ENCODE measurements at regions of chr11 and their contacts with region 1.

Region 1: DNA sequence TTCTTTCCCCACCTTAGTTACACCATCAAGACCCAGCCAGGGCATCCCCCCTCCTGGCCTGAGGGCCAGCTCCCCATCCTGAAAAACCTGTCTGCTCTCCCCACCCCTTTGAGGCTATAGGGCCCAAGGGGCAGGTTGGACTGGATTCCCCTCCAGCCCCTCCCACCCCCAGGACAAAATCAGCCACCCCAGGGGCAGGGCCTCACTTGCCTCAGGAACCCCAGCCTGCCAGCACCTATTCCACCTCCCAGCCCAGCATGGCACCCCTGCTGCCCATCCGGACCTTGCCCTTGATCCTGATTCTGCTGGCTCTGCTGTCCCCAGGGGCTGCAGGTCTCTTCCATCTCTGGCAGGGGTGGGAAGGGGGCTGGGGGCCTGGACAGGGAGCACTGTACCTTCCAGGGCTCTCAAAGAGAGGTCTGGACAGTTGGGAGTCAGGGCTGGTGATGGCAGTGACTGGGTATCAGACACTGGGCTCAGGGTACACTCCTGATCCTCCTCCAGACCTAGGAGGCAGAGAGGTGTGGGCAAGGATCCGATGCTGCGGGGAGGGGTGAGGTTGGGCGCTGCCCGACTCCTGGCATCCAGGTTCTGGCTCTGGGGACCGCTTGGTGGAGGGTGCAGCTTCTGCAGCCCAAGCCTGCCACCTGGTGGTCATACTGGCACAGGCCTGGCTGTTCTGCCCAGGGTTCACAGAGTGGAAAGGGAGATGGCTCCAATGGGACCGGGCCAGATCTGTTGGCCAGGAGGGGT is at the start of gene UPK2:
- DNase-seq: peak; percentile 94
- ATAC-seq: peak; percentile 96
- total RNA-seq, gene UPK2: not detected

Region 2: DNA sequence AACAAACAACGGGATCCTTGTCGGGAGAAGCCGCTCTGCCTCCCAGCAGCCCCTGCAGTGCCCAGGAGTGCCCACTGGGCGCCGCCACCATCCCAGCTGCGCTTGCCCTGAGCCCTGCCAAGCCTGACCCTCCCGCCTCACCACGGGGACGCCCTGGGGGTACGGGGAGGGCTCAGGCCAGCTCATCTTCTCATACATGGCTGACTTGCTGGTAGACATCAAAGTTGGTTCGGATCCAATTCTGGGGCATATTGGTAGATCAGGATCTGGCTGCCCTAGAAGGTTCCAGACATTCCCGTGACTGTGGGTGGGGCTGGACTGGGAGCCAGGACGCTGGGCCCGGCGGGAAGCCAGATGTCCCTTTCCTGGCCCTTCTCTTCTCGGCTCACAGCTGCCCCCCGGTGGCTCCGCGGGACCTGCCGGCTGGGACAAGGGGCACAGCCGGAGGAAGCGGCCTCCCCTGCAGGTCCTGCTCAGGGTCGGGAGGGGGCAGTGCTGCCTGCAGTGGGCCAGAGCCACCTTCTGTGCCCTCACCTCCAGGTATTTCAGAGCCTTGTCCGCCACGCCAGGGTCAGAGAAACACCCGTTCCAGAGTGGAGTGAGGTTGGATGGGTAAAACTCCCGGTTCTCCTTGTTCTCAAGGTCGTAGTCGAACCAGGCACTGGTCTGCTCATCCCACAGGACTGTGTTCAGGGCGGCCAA is 266.3 kb before region 1 on chr11:
- intact Hi-C with region 1: loop called (anchors 10 kb)
- DNase-seq: peak; percentile 98
- ATAC-seq: peak; percentile 95